WTC11 (cell line): ENCODE measurements at regions of chr3 and their contacts with region 1.

Region 1: GRCh38 chr3:157081681-157082210 is 78.2 kb downstream of the CCNL1 start:
- DNase-seq: peak; percentile 99
- ATAC-seq: peak; percentile 96
- H3K4me3 Mint-ChIP-seq: peak overlapping the region; percentile 32; the same call in 1 of the 2 replicates
- H3K27ac Mint-ChIP-seq: 0 out of 2 replicates have a peak overlapping the region, but pooled peaks have one; percentile 8
- H3K4me1 Mint-ChIP-seq: peaks cover 19% of the 10 kb centered on the region
- H3K27me3 Mint-ChIP-seq: peaks cover 7% of the 10 kb centered on the region
- CTCF ChIP-seq: peak; percentile 99

Region 2: DNA sequence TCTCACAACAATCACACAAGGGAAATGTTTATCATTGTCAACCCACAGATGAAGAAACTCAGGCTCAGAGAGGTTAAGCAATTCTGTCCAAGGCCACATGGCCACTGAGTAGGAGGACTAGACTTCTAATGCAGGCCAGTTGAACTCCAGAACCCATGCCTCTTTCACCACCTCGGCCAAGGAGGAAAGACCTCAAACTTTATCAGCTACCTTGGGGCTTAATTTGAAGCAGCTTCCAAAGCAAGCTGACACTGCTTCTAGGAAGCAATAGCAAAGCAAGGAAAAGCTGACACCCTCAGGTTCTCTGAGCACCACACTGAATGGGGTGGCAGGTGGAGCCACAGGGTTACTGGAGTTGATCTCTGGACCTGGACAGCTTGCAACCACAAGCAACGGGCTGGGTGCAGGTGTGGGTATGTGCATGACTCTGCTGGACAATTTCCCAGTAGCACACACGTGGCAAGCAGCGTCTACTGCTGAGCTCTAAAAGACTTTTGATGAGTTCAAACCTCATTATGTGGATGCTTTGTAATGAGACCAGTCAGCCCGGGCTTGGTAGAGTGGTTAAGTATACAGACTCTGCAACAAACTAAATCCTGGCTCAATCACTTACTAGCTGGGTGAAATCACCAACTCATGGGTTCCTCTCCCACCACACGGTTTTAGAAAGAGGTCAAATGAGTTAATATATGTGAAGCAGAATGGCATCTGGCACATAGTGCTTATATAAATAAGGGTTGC is 55.1 kb after region 1 on chr3:
- CTCF ChIA-PET with region 1: interaction called, 15 read pairs
- POLR2A ChIA-PET with region 1: interaction called, 7 read pairs
- DNase-seq: no peak
- ATAC-seq: no peak
- H3K4me3 Mint-ChIP-seq: no peak overlapping the region
- H3K27ac Mint-ChIP-seq: no peak overlapping the region
- H3K4me1 Mint-ChIP-seq: peaks cover 5% of the 10 kb centered on the region; the same call in 1 of the 2 replicates
- H3K27me3 Mint-ChIP-seq: no peaks in the 10 kb centered on the region; the same call in 1 of the 2 replicates
- CTCF ChIP-seq: no peak